ENCODE measurements at regions of chr14 and their contacts with region 1.

Region 1: GRCh38 chr14:68795597-68796417 is 2.9 kb upstream of the ZFP36L1 start:
- DNase-seq: peak; percentile 60 to 94 (median 82)
- ATAC-seq: peak; percentile 41
- H3K4me3 ChIP-seq: peak overlapping the region; percentile 94 to 97
- H3K4me3 Mint-ChIP-seq: peak overlapping the region; percentile 92
- H3K27ac ChIP-seq: peak overlapping the region; percentile 99 to 100
- H3K27ac Mint-ChIP-seq: peak overlapping the region; percentile 100
- H3K4me1 ChIP-seq: peaks cover 18% of the 10 kb centered on the region
- H3K4me1 Mint-ChIP-seq: peaks cover 37% of the 10 kb centered on the region
- H3K27me3 ChIP-seq: no peaks in the 10 kb centered on the region
- H3K27me3 Mint-ChIP-seq: no peaks in the 10 kb centered on the region
- CTCF ChIP-seq: peak; percentile 71

Region 2: GRCh38 chr14:68283378-68284123 is 512.3 kb before region 1 on chr14:
- CTCF ChIA-PET with region 1: interaction called, 40 read pairs
- POLR2A ChIA-PET with region 1: interaction called, 77 read pairs
- intact Hi-C with region 1: no loop called
- DNase-seq: peak; percentile 32 to 87 (median 72)
- ATAC-seq: peak; percentile 69
- H3K4me3 ChIP-seq: peak overlapping the region in 1 of 2 experiments; percentile 6
- H3K4me3 Mint-ChIP-seq: peak overlapping the region; percentile 62
- H3K27ac ChIP-seq: peak overlapping the region; percentile 57 to 89
- H3K27ac Mint-ChIP-seq: peak overlapping the region; percentile 98
- H3K4me1 ChIP-seq: peaks cover 71% of the 10 kb centered on the region
- H3K4me1 Mint-ChIP-seq: peaks cover 85% of the 10 kb centered on the region
- H3K27me3 ChIP-seq: no peaks in the 10 kb centered on the region
- H3K27me3 Mint-ChIP-seq: no peaks in the 10 kb centered on the region
- CTCF ChIP-seq: no peak

Region 3: DNA sequence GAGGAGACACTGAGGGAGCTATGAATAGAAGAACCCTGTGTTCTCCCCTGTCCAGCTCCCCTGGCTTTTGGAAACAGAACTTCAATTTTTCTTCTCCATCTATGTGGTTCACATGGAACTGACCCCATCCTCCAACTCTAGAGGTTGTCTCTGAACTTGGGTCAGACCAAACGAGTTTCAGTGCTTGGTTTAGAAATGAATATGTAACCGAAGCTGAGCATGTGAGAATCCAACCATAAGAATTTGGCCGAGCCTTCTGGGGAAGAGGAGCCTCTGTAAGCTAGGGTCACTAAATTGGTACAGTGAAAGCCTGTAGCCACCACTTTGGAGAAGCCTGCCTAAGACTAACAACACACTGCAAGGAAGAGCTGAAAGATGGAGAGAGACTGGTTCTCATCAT is 467.3 kb before region 1 on chr14:
- CTCF ChIA-PET with region 1: no interaction called
- POLR2A ChIA-PET with region 1: no interaction called
- intact Hi-C with region 1: no loop called
- DNase-seq: no peak
- ATAC-seq: no peak
- H3K4me3 ChIP-seq: no peak overlapping the region
- H3K4me3 Mint-ChIP-seq: no peak overlapping the region
- H3K27ac ChIP-seq: no peak overlapping the region
- H3K27ac Mint-ChIP-seq: no peak overlapping the region
- H3K4me1 ChIP-seq: no peaks in the 10 kb centered on the region
- H3K4me1 Mint-ChIP-seq: no peaks in the 10 kb centered on the region
- H3K27me3 ChIP-seq: no peaks in the 10 kb centered on the region
- H3K27me3 Mint-ChIP-seq: no peaks in the 10 kb centered on the region
- CTCF ChIP-seq: no peak

Region 4: DNA sequence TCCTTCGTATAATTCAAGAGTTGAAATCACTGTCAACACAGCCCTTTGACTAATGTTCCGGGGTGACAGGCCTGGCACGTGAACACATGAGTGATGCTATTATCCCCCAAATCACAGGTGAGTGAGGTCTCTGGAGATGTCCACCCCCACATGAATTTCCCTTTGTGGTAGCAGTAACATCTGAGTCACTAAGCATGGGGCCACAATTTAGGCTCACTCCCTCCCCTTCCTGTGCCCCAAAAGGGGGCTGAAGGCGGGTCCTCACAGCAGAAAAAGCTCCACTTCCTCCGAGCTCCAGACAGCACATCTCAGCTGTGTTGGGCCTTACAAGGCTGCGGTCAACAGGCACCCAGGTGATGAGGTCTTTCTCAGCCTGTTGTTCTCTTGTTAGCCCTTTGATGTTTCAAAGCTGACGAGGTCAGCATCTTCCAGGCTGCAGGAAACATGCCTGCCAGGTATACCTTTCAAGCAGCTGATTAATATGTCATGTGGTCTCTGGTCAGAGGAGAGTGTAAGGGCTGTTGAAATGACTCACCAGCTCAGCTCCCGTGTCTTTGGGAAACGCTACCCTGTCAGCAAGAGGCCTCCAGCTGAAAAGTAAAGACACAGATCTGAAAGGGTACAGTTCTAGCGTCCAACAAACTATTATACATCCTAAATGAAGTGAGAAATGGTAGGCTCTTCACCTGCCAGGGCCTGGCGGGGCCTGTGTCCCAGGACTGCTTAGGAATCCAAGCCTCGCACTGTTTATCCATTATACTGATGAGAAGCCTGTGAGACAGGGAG is 110.2 kb before region 1 on chr14:
- CTCF ChIA-PET with region 1: interaction called, 35 read pairs
- POLR2A ChIA-PET with region 1: interaction called, 36 read pairs
- intact Hi-C with region 1: loop called in 1 of 2 experiments (anchors 1 kb)
- DNase-seq: peak; percentile 67 to 94 (median 84)
- ATAC-seq: peak; percentile 87
- H3K4me3 ChIP-seq: no peak overlapping the region
- H3K4me3 Mint-ChIP-seq: peak overlapping the region; percentile 23
- H3K27ac ChIP-seq: peak overlapping the region; percentile 50 to 70
- H3K27ac Mint-ChIP-seq: peak overlapping the region; percentile 96
- H3K4me1 ChIP-seq: peaks cover 56% of the 10 kb centered on the region
- H3K4me1 Mint-ChIP-seq: peaks cover 70% of the 10 kb centered on the region
- H3K27me3 ChIP-seq: no peaks in the 10 kb centered on the region
- H3K27me3 Mint-ChIP-seq: no peaks in the 10 kb centered on the region
- CTCF ChIP-seq: no peak

Region 5: GRCh38 chr14:68807148-68807600 is 11.4 kb after region 1 on chr14:
- CTCF ChIA-PET with region 1: interaction called, 384 read pairs
- POLR2A ChIA-PET with region 1: interaction called, 641 read pairs
- intact Hi-C with region 1: no loop called
- DNase-seq: peak in 1 of 9 experiments; percentile 42
- ATAC-seq: peak; percentile 42
- H3K4me3 ChIP-seq: no peak overlapping the region
- H3K4me3 Mint-ChIP-seq: peak overlapping the region; percentile 19
- H3K27ac ChIP-seq: no peak overlapping the region
- H3K27ac Mint-ChIP-seq: peak overlapping the region; percentile 71
- H3K4me1 ChIP-seq: peaks cover 15% of the 10 kb centered on the region
- H3K4me1 Mint-ChIP-seq: peaks cover 38% of the 10 kb centered on the region
- H3K27me3 ChIP-seq: no peaks in the 10 kb centered on the region
- H3K27me3 Mint-ChIP-seq: no peaks in the 10 kb centered on the region
- CTCF ChIP-seq: no peak

Region 6: DNA sequence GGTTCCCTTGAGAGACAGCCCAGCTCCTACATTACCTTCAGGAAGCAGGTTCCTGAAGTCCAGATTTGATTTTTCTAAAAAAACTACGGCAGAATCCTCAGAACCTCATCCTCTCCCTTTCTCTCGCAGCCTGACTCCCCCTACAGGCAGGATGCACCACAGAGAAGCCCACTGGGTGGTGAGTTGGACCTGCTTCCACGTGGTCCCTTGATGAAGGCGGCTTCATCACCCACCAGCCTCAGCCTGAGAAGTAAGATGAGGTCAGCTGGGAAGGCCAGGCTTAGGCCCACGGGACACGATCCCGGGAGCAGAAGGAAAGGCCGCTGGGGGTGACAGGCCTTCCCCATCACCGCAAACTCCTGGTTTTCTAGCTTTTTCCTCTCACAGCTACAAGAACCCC is 100.3 kb after region 1 on chr14:
- CTCF ChIA-PET with region 1: no interaction called
- POLR2A ChIA-PET with region 1: no interaction called
- intact Hi-C with region 1: no loop called
- DNase-seq: no peak
- ATAC-seq: no peak
- H3K4me3 ChIP-seq: no peak overlapping the region
- H3K4me3 Mint-ChIP-seq: no peak overlapping the region
- H3K27ac ChIP-seq: no peak overlapping the region
- H3K27ac Mint-ChIP-seq: peak overlapping the region; percentile 30
- H3K4me1 ChIP-seq: peaks cover 15% of the 10 kb centered on the region
- H3K4me1 Mint-ChIP-seq: peaks cover 25% of the 10 kb centered on the region
- H3K27me3 ChIP-seq: no peaks in the 10 kb centered on the region
- H3K27me3 Mint-ChIP-seq: no peaks in the 10 kb centered on the region
- CTCF ChIP-seq: no peak

Region 7: DNA sequence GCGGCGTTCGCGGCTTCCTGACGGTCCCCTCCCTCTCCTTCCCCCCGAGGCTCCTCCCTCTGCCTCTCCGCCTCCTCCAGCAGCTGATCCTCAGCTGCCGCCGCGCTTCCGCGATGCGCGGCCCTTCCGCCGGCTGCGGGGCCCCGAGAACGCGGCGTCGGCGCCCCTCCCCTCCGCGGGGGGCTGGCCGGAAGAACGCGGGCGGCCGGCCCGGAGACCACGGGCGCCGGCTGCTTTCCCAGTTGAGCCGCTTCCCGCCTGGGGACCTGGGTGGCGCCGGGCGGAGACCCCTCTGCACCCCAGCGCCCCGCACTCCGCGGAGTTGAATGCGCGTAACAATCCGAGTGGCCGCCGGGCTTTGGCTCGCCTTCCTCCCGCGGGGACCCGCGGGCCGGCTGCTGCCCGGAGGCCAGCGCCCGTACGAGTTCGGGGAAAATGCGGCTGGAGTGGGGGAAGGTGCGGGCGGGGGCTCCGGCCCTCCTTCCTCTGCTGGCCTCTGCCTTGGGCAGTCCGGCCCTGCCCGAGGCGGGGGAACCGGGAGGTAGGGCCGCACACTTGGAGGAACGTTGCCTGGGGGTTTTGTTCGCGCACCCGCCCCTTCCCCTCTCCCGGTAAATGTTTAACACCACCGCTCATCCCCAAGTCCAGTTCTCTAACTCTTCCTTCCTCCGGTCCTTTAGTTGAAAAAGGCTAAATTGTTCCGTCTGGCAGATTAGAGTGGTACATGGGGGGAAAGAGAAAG is 357.5 kb after region 1 on chr14:
- CTCF ChIA-PET with region 1: no interaction called
- POLR2A ChIA-PET with region 1: no interaction called
- intact Hi-C with region 1: loop called (anchors 5 kb)
- DNase-seq: peak; percentile 87 to 98 (median 93)
- ATAC-seq: peak; percentile 91
- H3K4me3 ChIP-seq: peak overlapping the region; percentile 93 to 95
- H3K4me3 Mint-ChIP-seq: peak overlapping the region; percentile 89
- H3K27ac ChIP-seq: peak overlapping the region; percentile 51 to 69
- H3K27ac Mint-ChIP-seq: peak overlapping the region; percentile 95
- H3K4me1 ChIP-seq: peaks cover 36% of the 10 kb centered on the region
- H3K4me1 Mint-ChIP-seq: peaks cover 33% of the 10 kb centered on the region
- H3K27me3 ChIP-seq: no peaks in the 10 kb centered on the region
- H3K27me3 Mint-ChIP-seq: no peaks in the 10 kb centered on the region
- CTCF ChIP-seq: no peak